B cell (primary cell): ENCODE measurements at regions of chr2 and their contacts with region 1.

Region 1: GRCh38 chr2:182077451-182078142 is 91.9 kb downstream of the PPP1R1C start:
- DNase-seq: peak; percentile 41
- ATAC-seq: no peak
- H3K4me3 ChIP-seq: no peak overlapping the region
- H3K4me3 Mint-ChIP-seq: no peak overlapping the region
- H3K27ac ChIP-seq: no peak overlapping the region
- H3K27ac Mint-ChIP-seq: no peak overlapping the region
- H3K4me1 ChIP-seq: no peaks in the 10 kb centered on the region
- H3K4me1 Mint-ChIP-seq: no peaks in the 10 kb centered on the region
- H3K27me3 ChIP-seq: no peaks in the 10 kb centered on the region
- H3K27me3 Mint-ChIP-seq: peaks cover 4% of the 10 kb centered on the region
- CTCF ChIP-seq: peak; percentile 66

Region 2: DNA sequence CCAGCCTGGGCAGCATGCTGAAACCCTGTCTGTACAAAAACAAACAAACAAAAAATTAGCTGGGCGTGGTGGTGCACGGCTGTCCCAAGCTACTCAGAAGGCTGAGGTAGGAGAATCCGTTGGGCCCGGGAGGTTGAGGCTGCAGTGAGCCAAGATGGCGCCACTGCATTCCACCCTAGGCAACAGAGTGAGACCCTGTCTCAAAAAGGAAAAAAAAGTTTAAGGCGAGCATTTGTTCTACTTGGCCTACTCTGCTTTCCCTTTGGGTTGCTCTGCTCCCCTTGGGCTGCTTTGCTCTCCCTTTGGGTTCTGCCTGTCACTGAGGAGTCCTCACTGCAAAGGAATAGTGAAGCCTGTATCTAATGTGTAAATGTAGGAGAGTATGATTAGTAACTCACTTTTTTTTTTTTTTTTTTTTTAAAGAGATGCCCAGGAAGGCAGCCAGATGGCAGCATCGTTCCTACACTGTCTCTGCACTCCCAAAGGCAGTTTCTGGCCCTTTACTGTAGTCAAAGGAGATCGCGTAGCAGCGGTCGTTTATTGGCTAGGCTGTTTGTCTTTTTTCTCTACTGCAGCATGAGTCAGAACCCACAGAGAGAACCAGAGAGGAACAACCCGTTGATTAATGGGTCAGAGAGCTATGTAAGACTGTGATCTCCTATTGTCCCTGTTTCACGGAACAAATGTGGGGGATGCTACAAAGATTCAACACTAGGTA is 1952.2 kb before region 1 on chr2:
- CTCF ChIA-PET with region 1: interaction called, 3 read pairs
- POLR2A ChIA-PET with region 1: no interaction called
- intact Hi-C with region 1: loop called (anchors 10 kb)
- DNase-seq: peak; percentile 55
- ATAC-seq: peak; percentile 93
- H3K4me3 ChIP-seq: no peak overlapping the region
- H3K4me3 Mint-ChIP-seq: no peak overlapping the region
- H3K27ac ChIP-seq: no peak overlapping the region
- H3K27ac Mint-ChIP-seq: no peak overlapping the region
- H3K4me1 ChIP-seq: peaks cover 0 to 5% of the 10 kb centered on the region in 2 donors
- H3K4me1 Mint-ChIP-seq: peaks cover 4% of the 10 kb centered on the region
- H3K27me3 ChIP-seq: peaks cover 0 to 4% (median 0%) of the 10 kb centered on the region in 4 experiments
- H3K27me3 Mint-ChIP-seq: peaks cover 18% of the 10 kb centered on the region
- CTCF ChIP-seq: peak; percentile 66

Region 3: DNA sequence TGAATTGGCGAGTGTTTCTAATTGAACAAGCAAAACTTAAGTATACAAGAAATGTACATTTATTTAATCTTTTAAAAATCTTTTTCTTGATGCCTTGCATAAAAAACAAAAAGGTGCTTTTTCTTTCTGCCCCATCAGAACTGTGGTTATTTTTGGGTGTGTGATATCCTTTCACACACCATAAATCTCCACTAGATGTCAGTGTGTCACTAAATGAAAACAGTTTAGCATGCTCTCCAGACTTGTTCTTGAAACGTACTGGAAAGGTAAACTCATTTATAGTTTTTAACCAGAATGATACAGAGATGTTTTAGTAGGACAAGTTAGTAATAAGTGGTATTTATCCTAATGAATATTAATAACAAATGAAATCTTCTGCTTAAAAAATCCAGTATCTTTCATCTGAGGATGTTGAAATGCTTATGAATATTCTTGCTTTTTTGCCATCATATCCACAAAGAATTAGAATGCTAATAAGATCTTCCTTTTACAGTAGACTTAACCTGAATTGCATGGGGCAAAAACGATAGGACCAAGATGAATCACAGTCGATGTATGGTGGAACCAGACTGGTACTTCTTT is 1000.4 kb before region 1 on chr2:
- CTCF ChIA-PET with region 1: interaction called, 3 read pairs
- POLR2A ChIA-PET with region 1: no interaction called
- intact Hi-C with region 1: loop called (anchors 1 kb)
- DNase-seq: peak; percentile 70
- ATAC-seq: peak; percentile 65
- H3K4me3 ChIP-seq: no peak overlapping the region
- H3K4me3 Mint-ChIP-seq: no peak overlapping the region
- H3K27ac ChIP-seq: no peak overlapping the region
- H3K27ac Mint-ChIP-seq: no peak overlapping the region
- H3K4me1 ChIP-seq: no peaks in the 10 kb centered on the region
- H3K4me1 Mint-ChIP-seq: peaks cover 5% of the 10 kb centered on the region
- H3K27me3 ChIP-seq: no peaks in the 10 kb centered on the region
- H3K27me3 Mint-ChIP-seq: no peaks in the 10 kb centered on the region
- CTCF ChIP-seq: peak; percentile 85

Region 4: GRCh38 chr2:181104512-181105115 is 973.0 kb before region 1 on chr2:
- CTCF ChIA-PET with region 1: no interaction called
- POLR2A ChIA-PET with region 1: no interaction called
- intact Hi-C with region 1: loop called (anchors 5 kb)
- DNase-seq: peak; percentile 65
- ATAC-seq: peak; percentile 41
- H3K4me3 ChIP-seq: no peak overlapping the region
- H3K4me3 Mint-ChIP-seq: no peak overlapping the region
- H3K27ac ChIP-seq: no peak overlapping the region
- H3K27ac Mint-ChIP-seq: no peak overlapping the region
- H3K4me1 ChIP-seq: no peaks in the 10 kb centered on the region
- H3K4me1 Mint-ChIP-seq: peaks cover 2% of the 10 kb centered on the region
- H3K27me3 ChIP-seq: no peaks in the 10 kb centered on the region
- H3K27me3 Mint-ChIP-seq: no peaks in the 10 kb centered on the region
- CTCF ChIP-seq: peak; percentile 81

Region 5: DNA sequence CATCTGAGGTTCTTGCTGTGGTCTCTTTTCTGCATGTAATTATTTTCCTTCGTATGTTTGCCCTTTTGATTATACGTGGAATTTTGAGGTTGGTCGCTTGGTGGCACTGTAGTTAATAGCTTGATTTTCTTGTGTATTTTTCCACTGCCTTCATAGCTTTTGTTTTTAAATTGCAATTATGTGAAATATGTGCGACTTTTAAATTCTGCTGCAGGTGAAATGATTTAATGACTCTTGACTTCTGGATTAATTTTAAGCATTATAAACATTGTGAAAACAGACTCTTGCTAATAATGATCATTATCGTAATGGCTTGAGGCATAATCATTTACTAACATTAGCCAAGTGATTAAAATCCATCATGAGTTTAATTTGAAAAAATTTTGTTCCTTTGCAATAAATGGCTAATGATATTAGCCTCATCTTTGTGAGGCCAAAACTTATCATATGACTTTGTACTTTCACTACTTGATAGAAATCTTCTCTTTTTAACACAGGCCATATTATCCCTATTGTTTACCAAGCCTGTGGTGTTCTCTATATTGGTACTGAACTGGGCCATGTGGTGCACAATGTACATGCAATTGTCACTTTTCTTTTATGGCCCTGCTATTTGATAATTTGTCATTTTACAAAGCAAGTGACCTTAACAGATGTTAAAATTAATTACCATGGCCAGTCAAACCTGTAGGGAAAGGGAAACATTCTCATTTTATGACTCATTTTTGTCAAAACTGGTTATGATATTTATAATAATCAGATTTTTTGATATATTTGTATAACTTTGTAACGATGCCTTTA is 334.5 kb before region 1 on chr2:
- CTCF ChIA-PET with region 1: interaction called, 28 read pairs
- POLR2A ChIA-PET with region 1: no interaction called
- intact Hi-C with region 1: loop called (anchors 1 kb)
- DNase-seq: peak; percentile 49
- ATAC-seq: no peak
- H3K4me3 ChIP-seq: no peak overlapping the region
- H3K4me3 Mint-ChIP-seq: no peak overlapping the region
- H3K27ac ChIP-seq: no peak overlapping the region
- H3K27ac Mint-ChIP-seq: no peak overlapping the region
- H3K4me1 ChIP-seq: no peaks in the 10 kb centered on the region
- H3K4me1 Mint-ChIP-seq: no peaks in the 10 kb centered on the region
- H3K27me3 ChIP-seq: no peaks in the 10 kb centered on the region
- H3K27me3 Mint-ChIP-seq: peaks cover 4% of the 10 kb centered on the region
- CTCF ChIP-seq: peak; percentile 74

Region 6: DNA sequence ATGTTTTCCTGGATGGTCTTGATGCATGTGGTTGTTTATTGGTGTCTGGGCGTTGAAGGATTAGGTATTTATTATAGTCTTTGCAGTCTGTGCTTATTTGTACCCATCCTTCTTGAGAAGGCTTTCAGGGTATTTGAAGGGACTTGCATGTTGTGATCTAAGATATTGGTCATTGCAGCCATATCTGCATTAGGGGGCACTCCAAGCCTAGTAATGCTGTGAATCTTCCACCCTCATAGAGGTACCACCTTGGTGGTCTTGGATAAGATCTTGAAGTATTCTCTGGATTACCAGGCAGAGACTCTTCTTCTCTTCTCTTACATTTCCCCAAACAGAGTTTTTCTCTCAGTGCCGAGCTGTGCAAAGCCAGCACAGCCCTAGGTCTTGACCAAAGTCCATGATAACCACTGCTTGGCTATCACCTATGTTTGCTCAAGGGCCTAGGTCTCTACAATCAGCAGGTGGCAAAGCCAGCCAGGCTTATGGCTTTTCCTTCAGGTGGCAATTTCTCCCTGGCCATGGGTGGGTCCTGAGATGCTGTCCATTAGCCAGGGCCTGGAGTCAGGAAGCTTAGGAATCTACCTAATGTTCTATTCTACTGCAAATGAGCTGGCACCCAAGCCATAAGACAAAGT is 107.3 kb before region 1 on chr2:
- CTCF ChIA-PET with region 1: interaction called, 5 read pairs
- POLR2A ChIA-PET with region 1: no interaction called
- intact Hi-C with region 1: loop called (anchors 1 kb)
- DNase-seq: no peak
- ATAC-seq: no peak
- H3K4me3 ChIP-seq: no peak overlapping the region
- H3K4me3 Mint-ChIP-seq: no peak overlapping the region
- H3K27ac ChIP-seq: no peak overlapping the region
- H3K27ac Mint-ChIP-seq: no peak overlapping the region
- H3K4me1 ChIP-seq: no peaks in the 10 kb centered on the region
- H3K4me1 Mint-ChIP-seq: no peaks in the 10 kb centered on the region
- H3K27me3 ChIP-seq: no peaks in the 10 kb centered on the region
- H3K27me3 Mint-ChIP-seq: peaks cover 6% of the 10 kb centered on the region
- CTCF ChIP-seq: no peak

Region 7: GRCh38 chr2:182049372-182050148 is 28.0 kb before region 1 on chr2:
- CTCF ChIA-PET with region 1: no interaction called
- POLR2A ChIA-PET with region 1: no interaction called
- intact Hi-C with region 1: no loop called
- DNase-seq: no peak
- ATAC-seq: no peak
- H3K4me3 ChIP-seq: no peak overlapping the region
- H3K4me3 Mint-ChIP-seq: no peak overlapping the region
- H3K27ac ChIP-seq: no peak overlapping the region
- H3K27ac Mint-ChIP-seq: no peak overlapping the region
- H3K4me1 ChIP-seq: no peaks in the 10 kb centered on the region
- H3K4me1 Mint-ChIP-seq: no peaks in the 10 kb centered on the region
- H3K27me3 ChIP-seq: no peaks in the 10 kb centered on the region
- H3K27me3 Mint-ChIP-seq: no peaks in the 10 kb centered on the region
- CTCF ChIP-seq: no peak

Region 8: GRCh38 chr2:182088681-182089320 is 11.2 kb after region 1 on chr2:
- CTCF ChIA-PET with region 1: interaction called, 4 read pairs
- POLR2A ChIA-PET with region 1: no interaction called
- intact Hi-C with region 1: loop called (anchors 1 kb)
- DNase-seq: no peak
- ATAC-seq: no peak
- H3K4me3 ChIP-seq: no peak overlapping the region
- H3K4me3 Mint-ChIP-seq: no peak overlapping the region
- H3K27ac ChIP-seq: no peak overlapping the region
- H3K27ac Mint-ChIP-seq: no peak overlapping the region
- H3K4me1 ChIP-seq: no peaks in the 10 kb centered on the region
- H3K4me1 Mint-ChIP-seq: no peaks in the 10 kb centered on the region
- H3K27me3 ChIP-seq: no peaks in the 10 kb centered on the region
- H3K27me3 Mint-ChIP-seq: peaks cover 24% of the 10 kb centered on the region
- CTCF ChIP-seq: no peak

Region 9: GRCh38 chr2:182132605-182133004 is 55.0 kb after region 1 on chr2:
- CTCF ChIA-PET with region 1: no interaction called
- POLR2A ChIA-PET with region 1: no interaction called
- intact Hi-C with region 1: no loop called
- DNase-seq: no peak
- ATAC-seq: no peak
- H3K4me3 ChIP-seq: no peak overlapping the region
- H3K4me3 Mint-ChIP-seq: no peak overlapping the region
- H3K27ac ChIP-seq: no peak overlapping the region
- H3K27ac Mint-ChIP-seq: no peak overlapping the region
- H3K4me1 ChIP-seq: no peaks in the 10 kb centered on the region
- H3K4me1 Mint-ChIP-seq: no peaks in the 10 kb centered on the region
- H3K27me3 ChIP-seq: no peaks in the 10 kb centered on the region
- H3K27me3 Mint-ChIP-seq: peaks cover 9% of the 10 kb centered on the region
- CTCF ChIP-seq: no peak

Region 10: DNA sequence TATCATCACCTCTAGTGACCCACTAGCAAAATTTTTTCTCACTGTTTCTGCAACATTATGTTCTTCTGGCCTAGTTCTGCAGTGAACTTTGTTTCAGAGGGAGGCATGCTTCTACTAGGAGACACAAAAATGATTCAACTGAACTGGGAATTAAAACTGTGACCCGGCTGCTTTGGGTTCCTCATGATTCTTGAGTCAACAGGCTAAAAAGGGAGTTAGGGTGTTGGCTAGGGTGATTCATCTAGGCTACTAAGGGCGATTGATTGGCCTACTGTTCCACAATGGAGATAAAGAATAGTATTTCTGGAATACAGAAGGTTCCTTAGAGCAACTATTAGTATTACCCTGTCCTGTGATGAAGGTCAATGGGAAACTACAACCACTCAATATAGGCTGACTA is 87.6 kb after region 1 on chr2:
- CTCF ChIA-PET with region 1: no interaction called
- POLR2A ChIA-PET with region 1: no interaction called
- intact Hi-C with region 1: no loop called
- DNase-seq: no peak
- ATAC-seq: no peak
- H3K4me3 ChIP-seq: no peak overlapping the region
- H3K4me3 Mint-ChIP-seq: no peak overlapping the region
- H3K27ac ChIP-seq: no peak overlapping the region
- H3K27ac Mint-ChIP-seq: no peak overlapping the region
- H3K4me1 ChIP-seq: no peaks in the 10 kb centered on the region
- H3K4me1 Mint-ChIP-seq: no peaks in the 10 kb centered on the region
- H3K27me3 ChIP-seq: no peaks in the 10 kb centered on the region
- H3K27me3 Mint-ChIP-seq: peaks cover 3% of the 10 kb centered on the region
- CTCF ChIP-seq: no peak